ENCODE measurements at regions of chr22 and their contacts with region 1.

Region 1: GRCh38 chr22:45722006-45722405 is 50.4 kb downstream of the ATXN10 start:
- DNase-seq: no peak
- H3K4me3 ChIP-seq: no peak overlapping the region
- H3K27ac ChIP-seq: no peak overlapping the region
- H3K27me3 ChIP-seq: no peaks in the 10 kb centered on the region
- CTCF ChIP-seq: no peak

Region 2: GRCh38 chr22:45948081-45948648 is 226.2 kb after region 1 on chr22:
- CTCF ChIA-PET with region 1: interaction called, 10 read pairs
- POLR2A ChIA-PET with region 1: no interaction called
- DNase-seq: no peak
- H3K4me3 ChIP-seq: no peak overlapping the region
- H3K27ac ChIP-seq: no peak overlapping the region
- H3K27me3 ChIP-seq: no peaks in the 10 kb centered on the region
- CTCF ChIP-seq: no peak

Measured in AG04450 (cell line).